Breast epithelium (tissue), 4 donors: ENCODE measurements at regions of chr2 and their contacts with region 1.

Region 1: GRCh38 chr2:139359818-139360217 is 579.6 kb upstream of the NXPH2 start:
- DNase-seq: no peak
- H3K4me3 ChIP-seq: no peak overlapping the region
- H3K27ac ChIP-seq: no peak overlapping the region
- H3K4me1 ChIP-seq: no peaks in the 10 kb centered on the region
- H3K27me3 ChIP-seq: no peaks in the 10 kb centered on the region
- CTCF ChIP-seq: no peak
- POLR2A ChIP-seq: no peak

Region 2: DNA sequence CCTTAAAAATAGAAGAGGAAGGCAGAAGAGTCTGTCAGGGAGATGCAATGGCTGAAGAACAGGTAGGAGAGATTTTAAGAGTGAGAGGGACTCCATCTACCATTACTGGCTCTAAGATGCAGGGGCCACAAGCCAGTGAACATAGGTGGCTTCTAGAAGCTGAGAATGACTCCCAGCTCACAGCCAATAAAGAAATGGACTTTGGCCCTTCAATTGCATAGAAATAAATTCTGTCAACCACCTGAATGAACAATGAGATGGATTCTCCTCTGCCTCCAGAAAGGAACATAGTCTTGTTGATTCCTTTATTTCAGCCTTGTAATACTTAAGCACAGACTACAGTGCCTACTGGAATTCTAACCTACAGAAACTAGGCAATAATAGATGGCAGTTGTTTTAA is 23.7 kb after region 1 on chr2:
- intact Hi-C with region 1: loop called (anchors 1 kb)
- DNase-seq: no peak
- H3K4me3 ChIP-seq: no peak overlapping the region
- H3K27ac ChIP-seq: no peak overlapping the region
- H3K4me1 ChIP-seq: no peaks in the 10 kb centered on the region
- H3K27me3 ChIP-seq: no peaks in the 10 kb centered on the region
- CTCF ChIP-seq: no peak
- POLR2A ChIP-seq: no peak

Region 3: GRCh38 chr2:139411236-139411635 is 51.4 kb after region 1 on chr2:
- intact Hi-C with region 1: no loop called
- DNase-seq: no peak
- H3K4me3 ChIP-seq: no peak overlapping the region
- H3K27ac ChIP-seq: no peak overlapping the region
- H3K4me1 ChIP-seq: no peaks in the 10 kb centered on the region
- H3K27me3 ChIP-seq: no peaks in the 10 kb centered on the region
- CTCF ChIP-seq: no peak
- POLR2A ChIP-seq: no peak

Region 4: GRCh38 chr2:140041239-140041638 is 681.4 kb after region 1 on chr2:
- intact Hi-C with region 1: no loop called
- DNase-seq: no peak
- H3K4me3 ChIP-seq: no peak overlapping the region
- H3K27ac ChIP-seq: no peak overlapping the region
- H3K4me1 ChIP-seq: no peaks in the 10 kb centered on the region
- H3K27me3 ChIP-seq: no peaks in the 10 kb centered on the region
- CTCF ChIP-seq: no peak
- POLR2A ChIP-seq: no peak